ENCODE measurements at regions of chr13 and their contacts with region 1.

Region 1: GRCh38 chr13:33723772-33724435 is 94.0 kb upstream of the RFC3 start:
- DNase-seq: peak; percentile 84

Region 2: DNA sequence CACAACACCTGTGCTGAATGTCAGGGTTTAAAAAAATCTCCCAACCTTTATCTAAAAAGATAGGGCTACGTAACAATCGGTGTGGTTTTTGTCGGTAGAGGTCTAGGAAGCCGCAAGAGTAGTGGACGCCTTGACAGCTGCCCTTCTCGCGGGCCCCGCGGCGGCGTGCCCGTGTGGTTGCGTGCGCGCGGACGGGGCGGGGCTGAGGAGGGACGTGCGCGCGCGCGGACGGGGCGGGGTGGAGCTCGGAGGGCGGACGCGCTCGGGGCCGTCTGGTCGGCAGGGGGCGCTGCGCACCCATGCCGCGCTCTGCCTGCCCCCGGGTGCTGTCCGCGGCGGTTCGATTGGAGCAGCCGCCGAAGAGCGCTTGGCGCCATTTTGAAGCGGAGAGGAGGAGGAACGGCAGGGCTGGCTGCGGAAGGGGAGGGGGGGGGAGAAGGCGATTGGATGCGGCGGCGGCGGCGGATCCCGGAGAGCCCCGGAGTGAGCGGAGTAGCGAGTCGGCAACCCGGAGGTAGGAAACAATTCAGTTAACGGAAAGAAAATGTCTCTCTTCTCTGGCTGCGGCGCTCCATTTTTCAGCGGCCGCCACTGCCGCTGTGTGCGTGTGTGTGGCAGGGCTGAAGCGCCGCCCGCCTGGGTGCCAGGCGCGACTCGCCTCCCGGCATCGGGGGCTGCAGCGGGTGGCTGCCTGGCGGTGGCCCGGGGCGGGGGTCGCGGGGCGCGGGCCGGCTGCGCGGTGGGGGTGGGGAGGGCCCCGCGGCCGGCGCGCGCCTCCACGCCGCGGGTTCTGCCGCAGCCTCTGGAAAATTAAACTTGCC is 1137.6 kb before region 1 on chr13 and contains the start of gene PDS5B:
- intact Hi-C with region 1: loop called (anchors 5 kb)
- DNase-seq: peak; percentile 98
- total RNA-seq, gene PDS5B: 22.7 TPM

Region 3: DNA sequence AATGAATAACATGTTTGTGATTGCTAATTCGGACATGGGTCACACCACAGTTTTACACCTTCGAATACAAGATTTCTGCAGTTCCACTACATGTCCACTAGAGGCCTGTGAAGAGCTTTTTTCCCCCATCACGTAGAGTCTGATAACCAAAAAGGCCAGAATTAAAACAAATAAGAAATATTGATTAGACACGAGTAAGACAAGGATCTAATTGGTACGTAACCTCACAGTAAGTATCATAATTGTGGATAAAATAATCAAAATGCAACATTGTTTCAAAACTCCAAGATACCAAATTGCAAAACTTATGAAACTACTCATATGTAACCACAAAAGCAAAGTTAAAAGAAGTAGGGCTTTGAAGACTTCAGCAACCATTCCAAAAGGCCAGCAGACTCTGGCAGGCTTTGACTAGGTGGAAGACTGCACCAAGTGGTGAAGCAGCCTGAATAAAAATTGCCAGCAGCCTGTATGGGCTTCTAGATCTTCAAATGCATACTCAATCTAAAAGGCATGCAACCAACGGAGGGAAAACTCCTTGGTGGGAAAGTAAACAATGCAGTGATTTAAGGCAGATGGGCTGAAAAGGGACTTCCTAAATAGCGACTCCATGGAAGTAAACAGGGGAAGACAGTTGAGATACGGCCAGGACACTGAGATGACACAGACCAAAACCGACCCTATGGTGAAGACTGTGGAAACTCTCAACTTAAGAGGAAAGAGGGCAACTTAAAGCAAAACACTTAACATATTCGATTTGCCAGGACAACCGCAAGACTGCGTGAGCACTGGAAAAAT is 495.1 kb before region 1 on chr13:
- intact Hi-C with region 1: loop called (anchors 10 kb)
- DNase-seq: no peak

Region 4: DNA sequence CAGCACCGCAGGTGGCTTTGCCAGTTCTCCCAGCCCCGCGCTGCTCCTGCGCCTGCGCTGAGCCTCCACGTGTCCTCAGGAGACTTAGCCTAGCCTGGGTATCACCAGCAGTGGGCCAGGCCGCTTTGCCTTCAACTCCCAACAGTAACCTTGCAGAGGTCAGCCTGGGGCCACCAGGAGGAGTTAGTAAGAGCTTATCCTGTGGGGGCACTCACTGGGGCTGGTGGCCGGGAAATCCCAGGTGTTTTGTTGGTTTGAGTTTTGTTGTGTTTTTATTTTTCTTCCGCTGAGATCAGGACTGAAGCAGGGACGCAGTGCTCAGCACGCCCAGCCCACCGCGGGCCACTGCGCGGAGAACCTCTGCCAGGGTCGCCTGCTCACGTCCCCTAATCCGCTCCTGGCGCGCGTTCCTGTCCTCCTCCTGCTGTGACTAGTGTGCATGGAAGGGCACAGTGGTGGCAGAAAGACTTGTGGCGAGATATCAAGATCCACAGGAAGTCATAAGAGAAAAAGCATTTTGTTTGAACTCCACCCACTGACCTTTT is 113.4 kb before region 1 on chr13:
- intact Hi-C with region 1: loop called (anchors 2 kb)
- DNase-seq: peak; percentile 89

Region 5: DNA sequence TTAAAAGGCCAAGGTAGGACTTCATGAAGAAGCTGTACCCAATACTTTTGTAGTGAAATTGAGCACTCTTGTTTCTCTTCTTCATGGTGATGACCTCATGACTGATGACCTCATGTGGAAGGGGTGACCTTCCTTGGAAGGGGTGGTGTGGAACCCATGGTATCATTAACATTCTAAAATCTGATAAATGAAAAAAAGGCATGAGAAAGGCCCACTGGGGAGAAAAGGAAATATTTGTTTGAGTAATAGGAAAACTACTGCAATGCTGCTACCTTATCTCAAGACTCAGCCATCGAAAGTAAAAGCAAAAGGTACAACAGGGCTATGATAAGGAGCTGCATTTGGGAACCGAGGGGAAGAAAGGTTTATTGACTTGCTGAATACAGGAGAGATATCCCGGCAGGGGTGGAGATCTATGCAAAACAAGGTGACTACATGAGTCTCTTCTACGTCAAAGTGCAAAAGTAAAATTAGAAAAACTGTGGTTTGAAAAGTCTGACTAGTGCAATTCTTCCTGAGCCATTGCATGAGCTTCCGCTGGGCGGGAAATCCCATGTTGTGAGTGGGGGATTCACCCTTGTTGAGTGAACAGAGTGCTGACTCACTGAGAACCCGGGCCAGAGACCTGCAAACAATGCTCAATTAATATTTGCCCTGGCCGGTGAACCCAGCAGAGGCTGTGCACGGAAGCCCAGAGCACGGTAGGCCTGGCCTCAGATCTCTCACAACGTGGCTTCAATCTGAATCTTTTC is 44.8 kb before region 1 on chr13:
- intact Hi-C with region 1: loop called (anchors 5 kb)
- DNase-seq: peak; percentile 87

Measured in cardiac septum (tissue), 1 donor.